ENCODE measurements at regions of chr11 and their contacts with region 1.

Region 1: DNA sequence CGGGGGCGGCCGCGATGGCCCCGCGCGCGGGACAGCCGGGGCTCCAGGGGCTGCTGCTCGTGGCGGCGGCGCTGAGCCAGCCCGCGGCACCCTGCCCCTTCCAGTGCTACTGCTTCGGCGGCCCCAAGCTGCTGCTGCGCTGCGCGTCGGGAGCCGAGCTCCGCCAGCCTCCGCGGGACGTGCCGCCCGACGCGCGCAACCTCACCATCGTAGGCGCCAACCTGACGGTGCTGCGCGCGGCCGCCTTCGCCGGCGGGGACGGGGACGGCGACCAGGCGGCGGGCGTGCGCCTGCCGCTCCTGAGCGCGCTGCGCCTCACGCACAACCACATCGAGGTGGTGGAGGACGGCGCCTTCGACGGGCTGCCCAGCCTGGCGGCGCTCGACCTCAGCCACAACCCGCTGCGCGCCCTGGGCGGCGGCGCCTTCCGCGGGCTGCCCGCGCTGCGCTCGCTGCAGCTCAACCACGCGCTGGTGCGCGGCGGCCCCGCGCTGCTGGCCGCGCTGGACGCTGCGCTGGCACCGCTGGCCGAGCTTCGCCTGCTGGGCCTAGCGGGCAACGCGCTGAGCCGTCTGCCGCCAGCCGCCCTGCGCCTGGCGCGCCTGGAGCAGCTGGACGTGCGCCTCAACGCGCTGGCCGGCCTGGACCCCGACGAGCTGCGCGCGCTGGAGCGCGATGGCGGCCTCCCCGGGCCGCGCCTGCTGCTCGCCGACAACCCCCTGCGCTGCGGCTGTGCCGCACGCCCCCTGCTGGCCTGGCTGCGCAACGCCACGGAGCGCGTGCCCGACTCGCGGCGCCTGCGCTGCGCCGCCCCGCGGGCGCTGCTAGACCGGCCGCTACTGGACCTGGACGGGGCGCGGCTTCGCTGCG is 697 bp downstream of the TPBGL start:
- DNase-seq: no peak
- H3K4me3 ChIP-seq: peak overlapping the region; percentile 62
- CTCF ChIP-seq: peak; percentile 75

Region 2: DNA sequence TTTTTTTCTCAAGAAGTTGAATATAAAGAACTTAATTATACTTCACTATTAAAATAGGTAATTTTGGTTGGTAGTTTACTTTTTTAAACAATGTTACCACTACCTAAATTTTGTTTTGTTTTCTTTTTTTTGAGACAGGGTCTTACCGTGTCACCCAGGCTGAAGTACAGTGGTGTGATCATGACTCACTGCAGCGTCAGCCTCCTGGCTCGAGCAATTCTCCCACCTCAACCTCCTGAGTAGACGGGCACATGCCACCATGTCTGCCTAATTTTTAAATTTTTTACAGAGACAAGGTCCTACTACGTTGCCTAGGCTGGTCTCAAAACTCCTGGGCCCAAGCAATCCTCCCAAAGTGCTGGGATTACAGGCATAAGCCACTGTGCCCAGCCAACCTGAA is 274.6 kb before region 1 on chr11:
- CTCF ChIA-PET with region 1: interaction called, 10 read pairs
- POLR2A ChIA-PET with region 1: no interaction called
- DNase-seq: no peak
- H3K4me3 ChIP-seq: no peak overlapping the region
- CTCF ChIP-seq: no peak

Region 3: GRCh38 chr11:75014129-75014528 is 227.1 kb before region 1 on chr11:
- CTCF ChIA-PET with region 1: interaction called, 22 read pairs
- POLR2A ChIA-PET with region 1: no interaction called
- DNase-seq: peak; percentile 57
- H3K4me3 ChIP-seq: no peak overlapping the region
- CTCF ChIP-seq: no peak

Region 4: GRCh38 chr11:75022759-75023396 is 218.4 kb before region 1 on chr11:
- CTCF ChIA-PET with region 1: interaction called, 416 read pairs
- POLR2A ChIA-PET with region 1: no interaction called
- DNase-seq: peak; percentile 28
- H3K4me3 ChIP-seq: no peak overlapping the region
- CTCF ChIP-seq: peak; percentile 96

Region 5: DNA sequence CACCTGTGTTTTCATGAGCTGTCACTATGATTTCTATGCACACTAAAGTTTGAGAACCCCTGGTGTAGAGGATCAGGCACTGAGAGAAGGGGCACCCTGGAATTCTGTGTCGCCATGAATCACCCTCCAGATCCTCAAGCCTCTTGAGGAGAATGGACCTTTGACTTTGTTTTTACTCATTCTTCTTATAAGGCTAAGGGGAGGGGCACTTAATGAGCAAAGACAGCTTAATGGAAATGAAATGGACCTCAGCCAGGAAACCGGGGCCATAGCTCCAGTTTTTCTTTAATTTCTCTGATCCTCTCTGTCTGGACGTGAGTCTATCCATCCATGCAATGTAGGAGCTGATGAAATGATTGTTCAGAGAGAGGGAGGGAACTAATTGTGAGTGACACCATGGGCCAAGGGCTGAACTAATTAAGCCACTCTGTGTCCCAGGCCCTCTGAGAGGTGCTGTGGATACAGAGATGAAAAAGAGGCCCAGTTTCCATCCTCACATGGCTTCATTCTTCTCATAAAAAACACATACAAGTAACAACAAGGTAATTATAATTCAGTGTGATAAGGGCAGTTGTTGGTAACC is 177.4 kb before region 1 on chr11:
- CTCF ChIA-PET with region 1: no interaction called
- POLR2A ChIA-PET with region 1: no interaction called
- DNase-seq: no peak
- H3K4me3 ChIP-seq: no peak overlapping the region
- CTCF ChIP-seq: no peak

Region 6: DNA sequence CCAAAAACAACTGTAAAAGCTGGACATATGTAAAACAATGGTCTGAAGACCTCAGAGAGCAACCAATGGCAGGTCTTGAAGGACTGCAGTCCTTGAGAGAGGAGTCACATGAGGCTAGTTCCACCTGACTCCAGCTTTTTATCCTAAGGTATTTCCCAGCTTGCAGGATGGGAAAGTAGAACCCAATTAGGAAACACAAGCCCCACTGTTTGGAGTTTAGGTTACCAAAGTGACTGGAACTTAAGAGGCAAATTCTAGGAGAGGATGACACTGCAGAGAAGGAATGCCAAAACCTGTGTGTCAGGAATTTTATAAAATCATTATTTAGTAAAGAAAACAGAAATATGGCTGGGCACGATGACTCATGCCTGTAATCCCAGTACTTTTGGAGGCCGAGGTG is 163.0 kb before region 1 on chr11:
- CTCF ChIA-PET with region 1: no interaction called
- POLR2A ChIA-PET with region 1: no interaction called
- DNase-seq: no peak
- H3K4me3 ChIP-seq: no peak overlapping the region
- CTCF ChIP-seq: no peak

Region 7: GRCh38 chr11:75090671-75091177 is 150.5 kb before region 1 on chr11:
- CTCF ChIA-PET with region 1: no interaction called
- POLR2A ChIA-PET with region 1: no interaction called
- DNase-seq: no peak
- H3K4me3 ChIP-seq: no peak overlapping the region
- CTCF ChIP-seq: no peak

Region 8: GRCh38 chr11:75223954-75224643 is 17.2 kb before region 1 on chr11:
- CTCF ChIA-PET with region 1: interaction called, 31 read pairs
- POLR2A ChIA-PET with region 1: no interaction called
- DNase-seq: no peak
- H3K4me3 ChIP-seq: no peak overlapping the region
- CTCF ChIP-seq: no peak

Region 9: GRCh38 chr11:75254326-75254725 is 13.1 kb after region 1 on chr11:
- CTCF ChIA-PET with region 1: interaction called, 94 read pairs
- POLR2A ChIA-PET with region 1: no interaction called
- DNase-seq: no peak
- H3K4me3 ChIP-seq: no peak overlapping the region
- CTCF ChIP-seq: no peak

Region 10: DNA sequence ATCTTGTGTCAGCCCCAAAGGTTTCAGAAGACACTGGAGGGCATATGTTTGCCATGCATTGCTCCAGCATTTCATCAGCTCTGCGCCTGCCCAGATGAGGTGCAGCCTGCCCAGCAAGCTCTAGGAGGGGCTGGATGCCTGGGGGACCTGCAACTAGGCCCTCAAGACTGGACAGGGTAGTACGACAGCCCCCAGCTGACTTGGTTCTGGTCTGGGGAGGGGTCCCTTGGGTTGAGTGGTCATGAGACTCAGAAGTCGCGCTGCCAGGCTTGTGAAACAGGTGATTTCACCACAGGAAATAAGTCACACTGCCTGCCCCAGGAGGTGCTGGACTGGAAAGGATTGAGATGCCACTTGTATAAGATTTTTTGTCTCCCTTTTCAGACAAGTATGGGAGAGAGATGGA is 22.7 kb after region 1 on chr11:
- CTCF ChIA-PET with region 1: interaction called, 44 read pairs
- POLR2A ChIA-PET with region 1: no interaction called
- DNase-seq: no peak
- H3K4me3 ChIP-seq: no peak overlapping the region
- CTCF ChIP-seq: no peak

Measured in AG04449 (cell line).